GM12878 (cell line): ENCODE measurements at regions of chr1 and their contacts with region 1.

Region 1: DNA sequence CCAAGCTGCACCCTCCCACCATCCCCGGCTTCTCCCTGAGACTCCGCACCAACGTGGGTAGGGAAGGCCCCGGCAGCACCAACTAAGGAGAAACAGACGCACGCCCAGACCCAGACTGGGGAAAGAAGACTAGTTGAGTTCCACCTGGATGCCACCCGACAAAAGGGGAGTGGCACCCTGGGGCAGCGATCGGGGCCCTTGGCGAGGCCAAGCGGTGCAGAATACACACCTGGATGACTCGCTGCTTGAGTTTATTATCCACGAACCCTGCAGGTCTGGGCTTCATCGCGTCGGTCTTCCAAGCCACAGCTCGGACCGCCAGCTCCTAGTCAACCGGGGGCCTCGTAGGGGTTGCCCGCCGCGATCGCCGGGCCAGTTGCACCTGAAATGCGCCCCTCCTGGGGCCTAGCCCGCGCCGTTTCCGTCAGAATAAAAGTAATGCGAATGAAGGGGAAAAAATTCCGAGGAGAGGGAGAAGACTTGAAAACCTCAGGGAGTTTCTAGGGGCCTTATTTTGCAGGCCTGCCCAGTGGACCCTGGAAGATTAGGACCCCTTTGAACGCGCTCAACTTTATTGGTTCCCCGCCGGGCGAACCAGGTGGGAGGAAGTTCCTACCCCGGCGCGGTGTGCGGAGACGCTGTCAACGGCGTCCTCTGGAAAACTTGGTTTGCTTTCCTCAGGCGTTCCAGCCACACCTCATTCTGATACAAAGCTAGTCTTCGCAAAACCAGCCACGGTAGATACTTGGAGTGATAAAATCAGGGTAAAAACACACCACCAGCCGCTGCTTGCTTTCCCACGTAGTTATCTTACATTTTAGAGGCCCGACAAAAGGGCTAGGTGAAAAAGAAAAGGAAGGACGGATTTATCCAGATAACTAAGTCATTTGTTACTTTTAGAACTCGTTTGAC is at the start of gene NVL:
- DNase-seq: peak; percentile 48
- ATAC-seq: peak; percentile 85
- H3K4me3 ChIP-seq: peak within 1 kb of the TSS; percentile 97
- H3K27ac ChIP-seq: peak within 1 kb of the TSS; percentile 99
- H3K4me1 ChIP-seq: peaks cover 7% of the 10 kb centered on the region
- H3K27me3 ChIP-seq: no peaks in the 10 kb centered on the region
- CTCF ChIP-seq: no peak
- EP300 ChIP-seq: no peak
- POLR2A ChIP-seq: peak; percentile 85
- RAD21 ChIP-seq: no peak
- polyA plus RNA-seq, gene NVL: 20.3 to 30.4 TPM

Region 2: DNA sequence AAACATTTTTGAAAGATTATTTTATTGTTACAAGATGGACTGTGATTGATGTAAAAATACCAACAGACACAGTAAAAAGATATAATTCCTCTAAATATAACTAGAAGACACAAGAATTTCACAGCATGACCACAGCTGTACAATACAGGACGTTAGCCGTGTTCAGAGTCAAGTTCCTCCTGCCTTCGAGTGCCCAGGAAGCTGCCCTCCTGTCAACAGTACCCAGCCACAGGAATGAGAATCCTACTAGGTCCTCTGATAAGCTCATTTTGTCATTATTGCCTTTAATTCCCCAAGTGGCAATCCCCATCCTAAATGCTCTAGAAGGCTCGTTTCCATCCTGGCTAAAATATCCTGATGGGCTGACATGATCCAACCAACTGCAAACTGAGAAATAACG is 634.2 kb before region 1 on chr1:
- CTCF ChIA-PET with region 1: interaction called, 5 read pairs
- POLR2A ChIA-PET with region 1: no interaction called
- RAD21 ChIA-PET with region 1: interaction called, 6 read pairs
- SMC1A ChIA-PET with region 1: interaction called, 3 read pairs
- in situ Hi-C with region 1: loop called (anchors 10 kb)
- intact Hi-C with region 1: loop called (anchors 5 kb)
- DNase-seq: no peak
- ATAC-seq: no peak
- H3K4me3 ChIP-seq: no peak overlapping the region
- H3K27ac ChIP-seq: no peak overlapping the region
- H3K4me1 ChIP-seq: peaks cover 3% of the 10 kb centered on the region; the same call in 1 of the 2 replicates
- H3K27me3 ChIP-seq: no peaks in the 10 kb centered on the region
- CTCF ChIP-seq: no peak
- EP300 ChIP-seq: no peak
- POLR2A ChIP-seq: no peak
- RAD21 ChIP-seq: no peak

Region 3: GRCh38 chr1:223811634-223812415 is 518.3 kb before region 1 on chr1:
- CTCF ChIA-PET with region 1: interaction called, 5 read pairs
- POLR2A ChIA-PET with region 1: no interaction called
- RAD21 ChIA-PET with region 1: interaction called, 5 read pairs
- SMC1A ChIA-PET with region 1: interaction called, 6 read pairs
- in situ Hi-C with region 1: loop called (anchors 25 kb)
- intact Hi-C with region 1: no loop called
- DNase-seq: no peak
- ATAC-seq: peak; percentile 66
- H3K4me3 ChIP-seq: no peak overlapping the region
- H3K27ac ChIP-seq: no peak overlapping the region
- H3K4me1 ChIP-seq: no peaks in the 10 kb centered on the region
- H3K27me3 ChIP-seq: no peaks in the 10 kb centered on the region
- CTCF ChIP-seq: peak; percentile 27 to 63 (median 45); a peak in 5 of 6 replicates
- EP300 ChIP-seq: no peak
- POLR2A ChIP-seq: no peak
- RAD21 ChIP-seq: peak; percentile 79

Region 4: DNA sequence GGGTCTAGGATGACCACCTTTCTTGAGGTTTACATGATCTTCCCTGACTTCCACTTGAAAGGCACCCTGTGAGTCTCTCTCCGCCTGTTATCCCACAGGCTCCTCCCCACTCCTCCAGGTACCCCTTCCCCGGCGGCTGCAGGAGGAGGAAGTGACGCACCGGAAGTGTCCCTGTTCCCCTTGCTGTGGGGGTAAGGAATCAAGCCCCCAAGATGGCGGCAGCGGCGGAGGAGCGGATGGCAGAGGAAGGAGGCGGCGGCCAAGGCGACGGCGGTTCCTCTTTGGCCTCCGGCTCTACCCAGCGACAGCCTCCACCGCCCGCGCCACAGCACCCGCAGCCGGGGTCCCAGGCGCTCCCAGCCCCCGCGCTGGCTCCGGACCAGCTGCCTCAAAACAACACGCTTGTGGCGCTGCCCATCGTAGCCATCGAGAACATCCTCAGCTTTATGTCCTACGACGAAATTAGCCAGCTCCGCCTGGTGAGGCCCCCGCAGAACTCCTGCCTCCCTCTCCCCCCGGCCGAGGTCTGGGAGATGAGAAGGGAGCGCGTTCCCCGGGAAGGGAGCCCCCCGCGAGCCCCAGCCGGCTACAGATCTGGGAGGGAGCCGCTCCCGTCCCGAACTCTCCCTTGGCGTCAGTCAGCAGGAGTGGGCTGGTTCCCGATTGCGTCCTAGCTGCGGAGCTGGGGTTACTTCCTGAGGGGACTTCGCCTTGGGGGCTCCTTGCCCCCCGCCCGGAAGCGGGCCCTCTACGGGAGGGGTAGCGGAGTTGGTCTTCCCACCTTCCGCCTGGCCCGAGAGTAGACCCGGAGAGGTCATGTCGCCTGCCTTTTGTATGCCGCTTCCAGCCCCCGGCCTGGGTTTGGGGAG is 215.9 kb before region 1 on chr1 and contains the start of gene FBXO28:
- CTCF ChIA-PET with region 1: interaction called, 98 read pairs
- POLR2A ChIA-PET with region 1: interaction called, 5 read pairs
- RAD21 ChIA-PET with region 1: interaction called, 50 read pairs
- SMC1A ChIA-PET with region 1: interaction called, 60 read pairs
- in situ Hi-C with region 1: loop called (anchors 5 kb)
- intact Hi-C with region 1: loop called (anchors 1 kb)
- DNase-seq: peak; percentile 77
- ATAC-seq: peak; percentile 97
- H3K4me3 ChIP-seq: peak within 1 kb of the TSS; percentile 86
- H3K27ac ChIP-seq: peak within 1 kb of the TSS; percentile 81
- H3K4me1 ChIP-seq: 0 out of 2 replicates have a peak, but pooled peaks cover 2% of the 10 kb centered on the region
- H3K27me3 ChIP-seq: no peaks in the 10 kb centered on the region
- CTCF ChIP-seq: no peak
- EP300 ChIP-seq: no peak
- POLR2A ChIP-seq: peak; percentile 99
- RAD21 ChIP-seq: no peak
- polyA plus RNA-seq, gene FBXO28: 4.3 to 4.5 TPM

Region 5: DNA sequence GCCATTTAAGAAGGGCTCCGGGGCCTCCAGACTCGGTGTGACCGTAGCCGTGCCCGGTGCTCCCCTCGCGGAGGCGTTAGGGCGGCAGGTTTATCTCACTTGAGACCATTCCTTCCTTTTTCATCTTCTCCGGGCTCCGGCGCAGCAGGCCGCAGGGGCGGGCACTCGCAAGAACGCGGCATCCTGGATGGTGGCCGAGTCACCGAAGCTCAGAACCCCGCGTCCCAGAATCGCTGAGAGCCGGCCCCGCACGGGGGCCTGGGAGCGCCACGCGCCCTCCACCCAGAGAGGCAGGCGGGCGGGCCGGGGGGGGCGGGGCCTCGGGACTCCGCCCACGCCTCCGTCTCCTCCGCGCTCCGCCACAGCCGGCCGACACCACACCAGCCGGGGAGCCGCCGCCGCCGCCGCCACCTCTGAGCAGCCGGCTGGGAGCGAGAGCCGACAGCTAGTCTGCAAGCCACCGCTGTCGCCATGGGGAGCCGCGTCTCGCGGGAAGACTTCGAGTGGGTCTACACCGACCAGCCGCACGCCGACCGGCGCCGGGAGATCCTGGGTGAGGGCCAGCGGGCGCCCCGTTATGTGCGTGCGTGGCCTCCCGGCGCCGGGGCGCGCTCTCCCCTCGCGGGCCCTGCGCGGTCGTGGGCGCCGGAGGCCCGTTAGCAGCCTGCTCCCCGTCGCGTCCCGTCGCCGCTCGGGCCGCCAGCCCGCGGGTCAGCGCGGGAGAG is 147.1 kb before region 1 on chr1 and contains the start of gene DEGS1:
- CTCF ChIA-PET with region 1: interaction called, 6 read pairs
- POLR2A ChIA-PET with region 1: interaction called, 3 read pairs
- RAD21 ChIA-PET with region 1: interaction called, 5 read pairs
- SMC1A ChIA-PET with region 1: interaction called, 5 read pairs
- in situ Hi-C with region 1: no loop called
- intact Hi-C with region 1: loop called (anchors 2 kb)
- DNase-seq: no peak
- ATAC-seq: peak; percentile 76
- H3K4me3 ChIP-seq: peak within 1 kb of the TSS; percentile 90
- H3K27ac ChIP-seq: peak within 1 kb of the TSS; percentile 91
- H3K4me1 ChIP-seq: peaks cover 16% of the 10 kb centered on the region; the same call in 1 of the 2 replicates
- H3K27me3 ChIP-seq: no peaks in the 10 kb centered on the region
- CTCF ChIP-seq: no peak
- EP300 ChIP-seq: no peak; a peak in 1 of 4 replicates
- POLR2A ChIP-seq: peak; percentile 97
- RAD21 ChIP-seq: no peak
- polyA plus RNA-seq, gene DEGS1: 16.5 to 26.7 TPM

Region 6: GRCh38 chr1:224253721-224254120 is 76.4 kb before region 1 on chr1:
- CTCF ChIA-PET with region 1: no interaction called
- POLR2A ChIA-PET with region 1: no interaction called
- RAD21 ChIA-PET with region 1: no interaction called
- SMC1A ChIA-PET with region 1: no interaction called
- in situ Hi-C with region 1: no loop called
- intact Hi-C with region 1: no loop called
- DNase-seq: no peak
- ATAC-seq: no peak
- H3K4me3 ChIP-seq: no peak overlapping the region
- H3K27ac ChIP-seq: no peak overlapping the region
- H3K4me1 ChIP-seq: no peaks in the 10 kb centered on the region
- H3K27me3 ChIP-seq: no peaks in the 10 kb centered on the region
- CTCF ChIP-seq: no peak
- EP300 ChIP-seq: no peak
- POLR2A ChIP-seq: no peak
- RAD21 ChIP-seq: no peak

Region 7: GRCh38 chr1:224454397-224455066 is 124.4 kb after region 1 on chr1:
- CTCF ChIA-PET with region 1: interaction called, 28 read pairs
- POLR2A ChIA-PET with region 1: no interaction called
- RAD21 ChIA-PET with region 1: interaction called, 18 read pairs
- SMC1A ChIA-PET with region 1: interaction called, 21 read pairs
- in situ Hi-C with region 1: no loop called
- intact Hi-C with region 1: no loop called
- DNase-seq: no peak
- ATAC-seq: no peak
- H3K4me3 ChIP-seq: no peak overlapping the region
- H3K27ac ChIP-seq: no peak overlapping the region
- H3K4me1 ChIP-seq: no peaks in the 10 kb centered on the region
- H3K27me3 ChIP-seq: no peaks in the 10 kb centered on the region
- CTCF ChIP-seq: no peak
- EP300 ChIP-seq: no peak
- POLR2A ChIP-seq: no peak
- RAD21 ChIP-seq: no peak